HEK293 (cell line): ENCODE measurements at regions of chr7 and their contacts with region 1.

Region 1: DNA sequence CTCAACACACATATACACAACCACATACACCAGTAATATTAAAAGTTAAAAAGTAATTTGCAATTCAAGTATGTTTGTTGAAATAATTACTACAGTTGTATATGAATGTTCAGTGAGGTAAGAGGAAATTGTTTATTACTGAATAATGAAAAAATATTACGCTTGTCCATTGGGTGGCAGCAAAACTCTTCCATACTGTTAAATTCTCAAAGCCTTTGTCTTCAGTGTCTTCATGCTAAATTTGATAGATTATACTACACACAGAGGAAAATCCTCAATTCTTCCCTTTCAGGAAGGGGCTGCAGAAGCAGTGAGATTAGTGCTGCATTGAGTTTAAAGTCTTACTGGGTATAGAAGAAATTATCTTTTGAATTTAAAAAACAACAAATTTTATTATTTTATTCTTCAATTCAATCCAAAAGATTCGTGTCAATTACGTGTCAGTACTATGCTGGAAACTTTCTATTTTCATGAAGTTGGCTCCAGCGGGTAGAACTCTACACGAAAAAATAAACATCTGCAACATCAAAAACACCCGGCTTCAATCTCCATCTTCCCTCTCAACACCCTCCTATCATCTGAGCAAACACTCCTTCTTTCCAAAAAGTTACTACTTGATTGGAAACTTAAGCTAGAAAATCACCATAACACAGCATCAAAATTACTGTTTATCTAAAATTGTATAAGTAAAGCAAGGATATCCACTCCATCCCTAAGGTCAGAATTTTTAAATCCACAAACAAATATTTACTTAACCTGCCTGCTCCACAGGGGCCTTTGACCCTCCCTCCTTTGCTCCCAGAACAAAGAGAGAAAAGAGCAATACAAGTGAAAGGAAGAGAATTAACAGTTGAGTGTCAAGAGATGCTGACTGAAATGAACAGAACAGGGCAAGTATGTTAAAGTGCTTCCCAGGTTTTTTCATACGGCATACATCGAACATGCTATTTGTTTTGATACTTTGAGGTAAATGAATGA is 37.0 kb upstream of the TES start:
- H3K4me3 ChIP-seq: no peak overlapping the region
- H3K27ac ChIP-seq: no peak overlapping the region
- H3K4me1 ChIP-seq: no peaks in the 10 kb centered on the region
- CTCF ChIP-seq: peak; percentile 52; the same call in 1 of the 2 replicates

Region 2: GRCh38 chr7:116111475-116111874 is 61.9 kb before region 1 on chr7:
- CTCF ChIA-PET with region 1: no interaction called
- POLR2A ChIA-PET with region 1: no interaction called
- H3K4me3 ChIP-seq: no peak overlapping the region
- H3K27ac ChIP-seq: no peak overlapping the region
- H3K4me1 ChIP-seq: no peaks in the 10 kb centered on the region
- CTCF ChIP-seq: no peak

Region 3: DNA sequence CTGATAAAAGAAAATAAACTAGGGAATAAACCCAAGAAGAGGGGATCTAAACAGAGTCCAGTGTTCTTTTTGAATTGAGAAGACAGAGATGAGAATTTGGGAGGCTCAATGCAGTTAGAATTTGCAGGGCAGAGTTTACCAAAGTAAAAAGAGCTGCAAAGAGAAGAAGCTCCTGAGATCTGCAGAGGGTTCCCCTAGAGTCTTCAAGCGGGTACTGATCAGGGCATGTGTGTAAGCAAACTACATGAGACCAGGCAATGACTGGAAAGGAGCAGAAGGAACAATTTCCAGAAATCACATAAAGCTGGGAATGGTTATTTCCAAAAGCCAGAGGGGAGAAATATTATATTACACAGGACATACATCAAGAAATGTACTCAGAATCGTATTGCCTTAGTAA is 21.1 kb before region 1 on chr7:
- CTCF ChIA-PET with region 1: interaction called, 13 read pairs
- POLR2A ChIA-PET with region 1: no interaction called
- H3K4me3 ChIP-seq: no peak overlapping the region
- H3K27ac ChIP-seq: no peak overlapping the region
- H3K4me1 ChIP-seq: no peaks in the 10 kb centered on the region
- CTCF ChIP-seq: no peak

Region 4: GRCh38 chr7:116342125-116342524 is 168.8 kb after region 1 on chr7:
- CTCF ChIA-PET with region 1: no interaction called
- POLR2A ChIA-PET with region 1: no interaction called
- H3K4me3 ChIP-seq: no peak overlapping the region
- H3K27ac ChIP-seq: no peak overlapping the region
- H3K4me1 ChIP-seq: 0 out of 2 replicates have a peak, but pooled peaks cover 3% of the 10 kb centered on the region
- CTCF ChIP-seq: no peak

Region 5: DNA sequence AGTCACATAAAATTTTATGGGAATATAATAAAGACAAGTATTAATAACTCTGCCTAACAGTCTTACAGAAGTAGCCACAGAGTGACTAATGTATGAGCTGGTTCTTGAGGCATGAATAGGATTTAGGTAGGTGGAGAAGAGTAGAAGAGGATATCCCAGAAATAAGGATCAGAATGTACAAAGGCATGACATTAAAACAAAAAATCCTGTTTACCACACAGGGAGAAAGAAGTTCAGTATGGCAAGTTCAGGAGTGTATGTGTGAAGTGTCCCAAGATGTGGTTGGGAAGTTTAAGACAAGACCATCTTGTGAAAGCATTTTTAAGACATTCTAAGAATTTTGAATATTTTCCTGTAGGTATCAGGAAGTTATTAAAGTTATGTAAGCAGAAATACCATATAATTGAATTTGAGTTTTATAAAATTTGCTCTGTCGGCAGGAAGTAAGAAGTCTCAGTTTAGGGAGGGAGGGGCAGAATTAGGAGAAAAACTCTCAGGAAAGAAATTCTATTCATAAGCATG is 261.5 kb after region 1 on chr7:
- CTCF ChIA-PET with region 1: no interaction called
- POLR2A ChIA-PET with region 1: no interaction called
- H3K4me3 ChIP-seq: no peak overlapping the region
- H3K27ac ChIP-seq: no peak overlapping the region
- H3K4me1 ChIP-seq: no peaks in the 10 kb centered on the region
- CTCF ChIP-seq: no peak